ENCODE measurements at regions of chr3 and their contacts with region 1.

Region 1: GRCh38 chr3:58568572-58569286 is 8.5 kb downstream of the FAM107A start:
- DNase-seq: peak; percentile 88
- ATAC-seq: peak; percentile 43
- H3K4me3 Mint-ChIP-seq: no peak overlapping the region
- H3K27ac Mint-ChIP-seq: no peak overlapping the region
- H3K4me1 Mint-ChIP-seq: peaks cover 35% of the 10 kb centered on the region
- H3K27me3 Mint-ChIP-seq: peaks cover 6% of the 10 kb centered on the region
- CTCF ChIP-seq: peak; percentile 97

Region 2: DNA sequence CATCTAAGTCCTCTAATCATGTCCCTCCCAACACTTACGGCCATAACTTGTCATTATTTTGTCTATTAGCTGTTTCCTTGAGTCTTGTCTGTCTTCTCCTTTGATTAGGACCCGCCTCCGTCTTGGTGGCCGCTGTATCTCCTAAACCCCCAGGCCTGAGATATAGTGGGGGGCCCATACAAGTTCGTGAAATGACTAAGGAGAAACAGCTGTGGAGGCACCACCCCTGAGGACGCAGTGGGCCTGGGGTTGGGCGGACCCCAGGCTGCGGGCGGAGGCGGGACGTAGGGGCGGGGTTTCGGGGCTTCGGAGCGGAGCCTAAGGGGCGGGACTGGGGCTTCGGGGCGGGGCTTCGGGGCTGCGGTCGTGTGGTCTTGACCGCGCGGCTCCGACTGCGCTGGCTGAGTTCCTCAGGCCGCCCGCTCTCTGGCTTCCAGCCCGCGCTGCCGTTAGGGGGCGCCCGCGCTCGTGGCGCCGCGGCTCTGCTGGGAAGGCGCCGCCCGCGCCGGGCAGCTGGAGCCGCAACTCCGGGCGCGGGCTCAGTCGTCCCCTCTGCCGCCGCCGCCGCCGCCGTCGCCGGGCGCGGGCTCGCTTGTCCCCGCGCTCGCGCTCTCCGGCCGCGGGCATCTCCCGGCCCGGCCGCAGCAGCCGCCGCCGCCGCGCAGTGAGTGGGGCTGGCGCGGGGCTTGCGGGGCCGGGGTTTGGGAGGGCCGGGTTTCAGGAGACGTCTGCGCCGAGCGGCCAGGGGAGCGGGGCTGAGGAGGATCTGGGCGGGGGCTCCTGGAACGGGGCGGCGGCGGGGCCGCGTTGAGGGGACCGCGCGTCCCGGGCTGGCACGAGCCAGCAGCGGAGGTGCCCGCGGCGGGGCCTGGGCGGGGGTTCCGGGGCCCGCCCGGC is 77.0 kb before region 1 on chr3 and contains the start of gene KCTD6:
- CTCF ChIA-PET with region 1: interaction called, 10 read pairs
- POLR2A ChIA-PET with region 1: no interaction called
- DNase-seq: peak; percentile 97
- ATAC-seq: peak; percentile 97
- H3K4me3 Mint-ChIP-seq: peak within 1 kb of the TSS; percentile 89
- H3K27ac Mint-ChIP-seq: peak within 1 kb of the TSS; percentile 86
- H3K4me1 Mint-ChIP-seq: peaks cover 63% of the 10 kb centered on the region
- H3K27me3 Mint-ChIP-seq: peaks cover 12% of the 10 kb centered on the region
- CTCF ChIP-seq: peak; percentile 66
- total RNA-seq, gene KCTD6: 15.2 to 16.4 TPM (median 15.5 TPM) in 3 replicates

Region 3: GRCh38 chr3:58585005-58585786 is 16.5 kb after region 1 on chr3:
- CTCF ChIA-PET with region 1: interaction called, 27 read pairs
- POLR2A ChIA-PET with region 1: interaction called, 5 read pairs
- DNase-seq: peak; percentile 90
- ATAC-seq: peak; percentile 82
- H3K4me3 Mint-ChIP-seq: peak overlapping the region; percentile 63
- H3K27ac Mint-ChIP-seq: no peak overlapping the region
- H3K4me1 Mint-ChIP-seq: peaks cover 40% of the 10 kb centered on the region
- H3K27me3 Mint-ChIP-seq: peaks cover 47% of the 10 kb centered on the region
- CTCF ChIP-seq: peak; percentile 56

Region 4: DNA sequence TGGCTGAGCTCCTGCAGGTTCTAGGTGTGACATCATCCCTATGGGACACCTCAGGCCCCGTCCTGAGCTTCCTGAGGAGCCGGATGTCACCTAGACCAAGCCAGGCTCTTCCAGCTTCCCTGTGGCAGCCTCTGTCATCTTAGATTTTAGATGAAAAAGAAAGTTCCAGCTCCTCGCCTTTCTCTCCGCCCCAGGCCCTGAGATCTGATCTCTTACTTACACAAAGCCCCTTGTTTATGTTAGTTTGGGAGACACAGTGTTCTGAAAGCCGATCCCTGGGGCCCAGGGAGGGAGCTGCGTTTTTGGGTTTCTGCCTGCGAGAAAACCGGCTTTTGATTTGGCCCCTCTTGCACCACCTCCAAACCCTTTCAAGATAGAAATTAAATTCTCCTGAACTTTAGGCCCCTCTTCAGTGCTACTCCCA is 48.6 kb after region 1 on chr3:
- CTCF ChIA-PET with region 1: interaction called, 15 read pairs
- POLR2A ChIA-PET with region 1: interaction called, 3 read pairs
- DNase-seq: no peak
- ATAC-seq: peak; percentile 24
- H3K4me3 Mint-ChIP-seq: no peak overlapping the region
- H3K27ac Mint-ChIP-seq: no peak overlapping the region
- H3K4me1 Mint-ChIP-seq: peaks cover 10% of the 10 kb centered on the region
- H3K27me3 Mint-ChIP-seq: no peaks in the 10 kb centered on the region
- CTCF ChIP-seq: no peak

Region 5: GRCh38 chr3:58640700-58641372 is 72.1 kb after region 1 on chr3:
- CTCF ChIA-PET with region 1: interaction called, 19 read pairs
- POLR2A ChIA-PET with region 1: no interaction called
- DNase-seq: peak; percentile 93
- ATAC-seq: peak; percentile 96
- H3K4me3 Mint-ChIP-seq: peak overlapping the region; percentile 40; the same call in 1 of the 2 replicates
- H3K27ac Mint-ChIP-seq: no peak overlapping the region
- H3K4me1 Mint-ChIP-seq: peaks cover 2% of the 10 kb centered on the region; the same call in 1 of the 2 replicates
- H3K27me3 Mint-ChIP-seq: peaks cover 62% of the 10 kb centered on the region
- CTCF ChIP-seq: peak; percentile 80